Left ventricle myocardium superior (tissue), 1 donor: ENCODE measurements at regions of chr2 and their contacts with region 1.

Region 1: DNA sequence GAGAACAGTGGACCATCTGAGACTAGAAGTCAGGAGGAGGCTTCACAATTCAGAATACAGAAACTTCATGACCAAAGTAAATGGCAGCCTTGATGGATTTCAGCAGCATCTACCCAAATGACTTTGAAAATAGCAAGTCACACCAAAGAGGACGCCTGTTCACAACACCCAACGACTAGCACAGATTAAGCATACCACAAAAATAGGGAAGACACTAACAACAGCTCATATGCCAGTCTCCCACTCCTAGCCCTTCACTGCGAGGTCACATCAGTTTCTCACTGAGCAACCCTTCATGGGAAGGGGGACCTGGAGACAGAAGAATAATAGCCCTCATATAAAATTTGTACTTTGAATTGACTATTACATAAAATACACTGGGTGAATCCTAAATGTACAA is 228.4 kb upstream of the SLC39A10 start:
- DNase-seq: no peak
- ATAC-seq: no peak

Region 2: GRCh38 chr2:194883711-194884110 is 545.0 kb before region 1 on chr2:
- intact Hi-C with region 1: loop called (anchors 5 kb)
- DNase-seq: no peak
- ATAC-seq: peak; percentile 45

Region 3: GRCh38 chr2:195414537-195415095 is 14.1 kb before region 1 on chr2:
- intact Hi-C with region 1: no loop called
- DNase-seq: no peak
- ATAC-seq: no peak